Activated CD4-positive, alpha-beta T cell treated with anti-CD3 and anti-CD28 coated beads, Interleukin-2, amount 10 ng/mL, durations not matched to agents 24 days and 14 days (primary cell): ENCODE measurements at regions of chr22 and their contacts with region 1.

Region 1: GRCh38 chr22:35299673-35300497 is at the start of gene TOM1:
- DNase-seq: peak; percentile 99
- H3K4me3 Mint-ChIP-seq: peak within 1 kb of the TSS; percentile 96
- H3K27ac Mint-ChIP-seq: peak within 1 kb of the TSS; percentile 94
- H3K4me1 Mint-ChIP-seq: peaks cover 33% of the 10 kb centered on the region
- H3K27me3 Mint-ChIP-seq: peaks cover 2% of the 10 kb centered on the region
- total RNA-seq, gene TOM1: 16.8 and 18.7 TPM in 2 replicates

Region 2: DNA sequence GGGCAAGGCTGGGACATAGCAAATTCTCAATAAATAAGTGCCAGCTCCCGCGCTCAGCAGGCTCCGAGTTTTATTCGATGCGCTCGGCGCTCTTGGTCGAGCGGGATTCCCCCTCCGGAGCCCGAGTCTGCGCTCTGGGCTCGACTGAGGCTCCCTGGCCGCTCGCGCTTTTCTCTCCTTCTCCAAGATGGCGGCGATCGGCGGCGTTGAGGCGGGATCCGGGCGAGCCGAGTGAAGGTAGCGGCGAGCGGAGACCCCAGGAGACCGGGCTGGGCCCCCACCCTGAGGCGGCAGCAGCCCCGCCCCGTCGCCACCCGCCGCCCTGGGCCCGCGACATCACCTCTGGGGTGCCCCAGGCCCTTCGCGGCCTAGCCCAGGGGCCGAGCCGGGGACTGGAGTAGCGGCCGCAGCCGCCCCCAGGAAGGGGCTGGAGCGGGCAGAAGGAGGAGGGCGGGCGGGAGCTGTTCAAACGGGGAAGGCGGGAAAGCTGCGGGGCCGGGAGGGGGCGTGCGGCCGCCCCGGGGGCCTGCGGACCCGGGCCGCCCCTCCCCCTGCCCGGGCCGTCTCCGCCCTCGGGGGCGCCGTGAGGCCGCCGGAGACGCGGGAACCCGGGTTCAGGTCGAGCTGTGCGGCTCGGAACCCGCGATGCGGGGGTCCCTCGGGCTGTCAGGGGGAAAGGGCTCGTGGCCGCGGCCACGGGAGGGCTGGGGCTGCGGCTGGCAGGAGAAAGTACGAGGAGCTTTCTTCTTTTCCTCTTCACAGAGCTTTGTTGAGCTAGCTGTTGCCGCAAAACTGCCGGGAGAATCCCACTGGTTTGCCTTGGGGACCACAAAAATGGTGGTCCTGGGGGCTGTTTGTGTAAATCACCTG is 42.3 kb before region 1 on chr22 and contains the start of gene HMGXB4:
- intact Hi-C with region 1: loop called (anchors 2 kb)
- DNase-seq: peak; percentile 96
- H3K4me3 Mint-ChIP-seq: peak within 1 kb of the TSS; percentile 92
- H3K27ac Mint-ChIP-seq: peak within 1 kb of the TSS; percentile 96
- H3K4me1 Mint-ChIP-seq: peaks cover 30% of the 10 kb centered on the region
- H3K27me3 Mint-ChIP-seq: no peaks in the 10 kb centered on the region
- total RNA-seq, gene HMGXB4: 46.9 and 47.7 TPM in 2 replicates

Region 3: GRCh38 chr22:35313311-35314121 is 13.6 kb after region 1 on chr22:
- intact Hi-C with region 1: no loop called
- DNase-seq: no peak
- H3K4me3 Mint-ChIP-seq: no peak overlapping the region
- H3K27ac Mint-ChIP-seq: no peak overlapping the region
- H3K4me1 Mint-ChIP-seq: peaks cover 51% of the 10 kb centered on the region
- H3K27me3 Mint-ChIP-seq: no peaks in the 10 kb centered on the region

Region 4: GRCh38 chr22:35399678-35400334 is 99.9 kb after region 1 on chr22 and contains the start of gene MCM5:
- intact Hi-C with region 1: loop called (anchors 2 kb)
- DNase-seq: peak; percentile 99
- H3K4me3 Mint-ChIP-seq: peak within 1 kb of the TSS; percentile 100
- H3K27ac Mint-ChIP-seq: peak within 1 kb of the TSS; percentile 99
- H3K4me1 Mint-ChIP-seq: peaks cover 26% of the 10 kb centered on the region
- H3K27me3 Mint-ChIP-seq: no peaks in the 10 kb centered on the region
- total RNA-seq, gene MCM5: 334 and 343 TPM in 2 replicates